ENCODE measurements at regions of chr16 and their contacts with region 1.

Region 1: GRCh38 chr16:67672739-67673662 is 6.4 kb downstream of the C16orf86 start:
- DNase-seq: peak; percentile 82
- H3K4me3 Mint-ChIP-seq: no peak overlapping the region
- H3K27ac Mint-ChIP-seq: peak overlapping the region; percentile 58
- H3K4me1 Mint-ChIP-seq: peaks cover 13% of the 10 kb centered on the region
- H3K27me3 Mint-ChIP-seq: no peaks in the 10 kb centered on the region

Region 2: GRCh38 chr16:67632415-67633172 is 40.4 kb before region 1 on chr16:
- CTCF ChIA-PET with region 1: no interaction called
- DNase-seq: no peak
- H3K4me3 Mint-ChIP-seq: no peak overlapping the region
- H3K27ac Mint-ChIP-seq: no peak overlapping the region
- H3K4me1 Mint-ChIP-seq: no peaks in the 10 kb centered on the region
- H3K27me3 Mint-ChIP-seq: no peaks in the 10 kb centered on the region

Region 3: DNA sequence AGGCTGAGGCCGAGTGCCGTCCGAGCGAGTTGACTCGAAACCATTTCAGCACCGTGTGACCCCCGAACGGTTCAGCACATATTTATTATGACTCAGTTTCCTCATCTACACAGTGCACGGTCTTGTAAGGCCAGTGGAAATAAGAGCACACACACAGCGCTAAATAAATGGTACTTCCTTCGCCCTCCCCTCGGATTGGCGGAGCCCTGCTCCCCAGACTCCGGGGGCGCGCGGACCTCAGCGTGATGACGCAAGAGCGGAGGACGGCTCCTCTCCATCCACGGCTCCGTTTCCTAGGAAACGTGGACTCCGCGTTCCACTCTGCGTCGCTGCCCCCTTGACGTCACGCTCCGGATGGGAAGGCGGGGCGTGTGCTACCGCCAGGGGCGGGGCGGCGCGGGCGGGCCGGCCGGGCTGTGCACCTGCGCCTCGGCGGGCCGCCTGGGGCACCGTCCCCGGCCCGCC is 12.4 kb before region 1 on chr16 and contains the start of gene PARD6A:
- CTCF ChIA-PET with region 1: interaction called, 11 read pairs
- DNase-seq: peak; percentile 98
- H3K4me3 Mint-ChIP-seq: peak within 1 kb of the TSS; percentile 95
- H3K27ac Mint-ChIP-seq: peak within 1 kb of the TSS; percentile 97
- H3K4me1 Mint-ChIP-seq: peaks cover 34% of the 10 kb centered on the region
- H3K27me3 Mint-ChIP-seq: no peaks in the 10 kb centered on the region

Region 4: DNA sequence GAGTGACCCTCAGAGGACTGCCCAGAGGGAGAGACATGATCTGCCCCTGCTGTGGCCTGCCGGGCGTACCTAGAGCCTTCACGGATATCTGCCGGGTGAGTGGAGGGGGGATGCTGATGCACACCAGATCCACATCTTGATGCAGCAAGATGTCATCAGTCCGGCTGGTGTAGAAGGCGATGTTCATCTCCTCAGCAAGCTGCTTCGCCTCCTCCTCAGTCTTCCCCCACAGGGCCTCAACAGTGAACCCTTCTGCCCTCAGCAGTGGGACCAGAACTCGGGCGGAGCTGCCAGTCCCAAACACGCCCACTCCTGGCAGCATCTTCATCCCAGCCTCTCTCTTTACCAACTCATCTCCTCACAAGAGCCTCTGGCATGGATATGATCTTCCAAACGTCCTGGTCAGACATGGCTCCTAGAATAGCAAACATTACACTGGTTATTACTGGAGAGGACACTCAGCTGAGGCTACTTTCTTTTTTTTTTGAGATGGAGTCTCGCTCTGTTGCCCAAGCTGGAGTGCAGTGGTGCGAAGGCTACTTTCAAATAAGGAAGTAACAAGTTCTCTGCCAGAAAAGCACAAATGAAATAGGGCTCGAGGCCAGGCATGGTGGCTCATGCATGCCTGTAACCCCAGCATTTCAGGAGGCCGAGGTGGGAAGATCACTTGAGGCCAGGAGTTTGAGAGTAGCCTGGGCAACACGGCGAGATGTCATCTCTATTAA is 12.5 kb after region 1 on chr16:
- CTCF ChIA-PET with region 1: interaction called, 10 read pairs
- DNase-seq: no peak
- H3K4me3 Mint-ChIP-seq: no peak overlapping the region
- H3K27ac Mint-ChIP-seq: peak overlapping the region; percentile 87
- H3K4me1 Mint-ChIP-seq: peaks cover 20% of the 10 kb centered on the region
- H3K27me3 Mint-ChIP-seq: no peaks in the 10 kb centered on the region

Region 5: GRCh38 chr16:67865316-67865715 is 192.3 kb after region 1 on chr16:
- CTCF ChIA-PET with region 1: interaction called, 10 read pairs
- DNase-seq: peak; percentile 52
- H3K4me3 Mint-ChIP-seq: no peak overlapping the region
- H3K27ac Mint-ChIP-seq: no peak overlapping the region
- H3K4me1 Mint-ChIP-seq: no peaks in the 10 kb centered on the region
- H3K27me3 Mint-ChIP-seq: no peaks in the 10 kb centered on the region

Measured in activated naive CD4-positive, alpha-beta T cell treated with anti-CD3 and anti-CD28 coated beads, Interleukin-2, amount 10 ng/mL, durations not matched to agents 7 days and 5 days (primary cell).